ENCODE measurements at regions of chr2 and their contacts with region 1.

Region 1: DNA sequence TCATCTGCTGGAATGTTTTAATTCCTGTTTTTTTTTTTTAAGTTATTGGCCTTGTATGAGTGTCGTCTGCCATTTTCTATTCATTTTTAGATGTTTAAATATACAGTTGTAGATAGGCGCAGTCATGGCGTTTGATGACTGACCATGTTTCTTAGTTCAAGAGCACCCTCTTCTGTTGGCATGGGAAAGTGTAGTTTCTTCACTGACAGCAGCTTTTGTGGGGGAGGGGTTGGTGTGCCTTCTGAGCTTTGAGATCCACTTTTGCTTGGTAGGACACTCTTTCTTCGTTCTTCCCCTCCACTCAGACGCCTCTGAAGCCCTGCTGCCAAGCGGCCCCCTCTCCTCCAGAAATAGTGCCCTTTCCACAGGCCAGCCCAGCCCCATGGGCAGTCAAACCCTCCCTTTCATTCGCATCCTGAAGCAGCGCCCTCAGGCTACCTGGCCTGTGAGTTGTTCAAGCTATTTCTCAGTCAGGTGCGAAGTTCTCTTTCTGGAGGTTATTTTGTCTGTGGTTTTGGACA is 492.0 kb downstream of the TNS1 start:
- DNase-seq: peak; percentile 93
- ATAC-seq: peak; percentile 93
- H3K4me3 ChIP-seq: no peak overlapping the region
- H3K27ac ChIP-seq: peak overlapping the region; percentile 87
- H3K4me1 ChIP-seq: peaks cover 17% of the 10 kb centered on the region
- H3K27me3 ChIP-seq: no peaks in the 10 kb centered on the region
- CTCF ChIP-seq: peak; percentile 91
- POLR2A ChIP-seq: 0 out of 2 replicates have a peak, but pooled peaks have one; percentile 28
- RAD21 ChIP-seq: peak; percentile 97

Region 2: GRCh38 chr2:217054791-217055190 is 456.0 kb before region 1 on chr2:
- CTCF ChIA-PET with region 1: no interaction called
- POLR2A ChIA-PET with region 1: no interaction called
- dilution Hi-C with region 1: no loop called
- in situ Hi-C with region 1: no loop called
- intact Hi-C with region 1: loop called (anchors 10 kb)
- DNase-seq: no peak
- ATAC-seq: peak; percentile 16; the same call in 1 of the 2 replicates
- H3K4me3 ChIP-seq: no peak overlapping the region
- H3K27ac ChIP-seq: peak overlapping the region; percentile 13; the same call in 1 of the 2 replicates
- H3K4me1 ChIP-seq: peaks cover 3% of the 10 kb centered on the region
- H3K27me3 ChIP-seq: no peaks in the 10 kb centered on the region; the same call in 1 of the 2 replicates
- CTCF ChIP-seq: no peak
- POLR2A ChIP-seq: no peak
- RAD21 ChIP-seq: no peak

Region 3: DNA sequence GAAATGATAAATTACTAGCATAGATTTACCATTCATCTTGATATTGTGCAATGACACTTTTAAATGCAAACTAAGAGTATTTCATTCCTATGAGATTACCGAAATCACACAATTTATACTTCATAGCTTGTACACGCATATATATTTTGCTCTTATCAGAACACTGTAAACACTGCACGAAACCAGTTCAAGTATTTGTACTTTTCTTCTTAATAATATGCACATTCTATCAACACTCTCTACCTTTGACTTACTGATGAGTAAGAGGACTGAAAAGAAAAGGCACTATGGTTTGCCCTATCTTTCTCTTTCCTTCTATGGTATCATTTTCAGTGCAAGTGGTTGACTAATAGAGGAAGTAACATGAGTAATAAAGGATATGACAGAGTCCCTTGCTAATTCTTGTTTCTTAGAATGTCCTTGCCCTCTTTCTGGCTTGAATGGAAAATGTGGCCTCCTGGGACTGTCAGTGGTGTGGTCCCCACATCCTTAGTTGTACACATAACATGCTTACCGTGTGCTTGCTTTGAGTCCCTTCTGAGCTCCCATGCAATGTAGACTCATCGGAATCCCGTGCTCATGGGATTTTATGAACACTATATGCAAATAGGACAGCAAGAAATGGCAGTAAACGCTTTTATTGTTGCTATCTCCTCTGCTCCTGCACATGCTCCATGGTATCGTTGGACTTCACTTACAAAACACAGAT is 287.5 kb before region 1 on chr2:
- CTCF ChIA-PET with region 1: no interaction called
- POLR2A ChIA-PET with region 1: no interaction called
- dilution Hi-C with region 1: no loop called
- in situ Hi-C with region 1: no loop called
- intact Hi-C with region 1: loop called (anchors 1 kb)
- DNase-seq: peak; percentile 99
- ATAC-seq: peak; percentile 85
- H3K4me3 ChIP-seq: no peak overlapping the region
- H3K27ac ChIP-seq: peak overlapping the region; percentile 99
- H3K4me1 ChIP-seq: peaks cover 35% of the 10 kb centered on the region
- H3K27me3 ChIP-seq: no peaks in the 10 kb centered on the region
- CTCF ChIP-seq: no peak
- POLR2A ChIP-seq: no peak
- RAD21 ChIP-seq: peak; percentile 28

Region 4: GRCh38 chr2:217338306-217338916 is 172.4 kb before region 1 on chr2:
- CTCF ChIA-PET with region 1: no interaction called
- POLR2A ChIA-PET with region 1: interaction called, 13 read pairs
- dilution Hi-C with region 1: no loop called
- in situ Hi-C with region 1: no loop called
- intact Hi-C with region 1: loop called (anchors 2 kb)
- DNase-seq: peak; percentile 96
- ATAC-seq: peak; percentile 73
- H3K4me3 ChIP-seq: no peak overlapping the region
- H3K27ac ChIP-seq: peak overlapping the region; percentile 100
- H3K4me1 ChIP-seq: peaks cover 12% of the 10 kb centered on the region
- H3K27me3 ChIP-seq: no peaks in the 10 kb centered on the region
- CTCF ChIP-seq: no peak
- POLR2A ChIP-seq: no peak
- RAD21 ChIP-seq: no peak

Region 5: GRCh38 chr2:217713395-217714286 is 202.8 kb after region 1 on chr2:
- CTCF ChIA-PET with region 1: interaction called, 6 read pairs
- POLR2A ChIA-PET with region 1: no interaction called
- dilution Hi-C with region 1: no loop called
- in situ Hi-C with region 1: loop called (anchors 5 kb)
- intact Hi-C with region 1: loop called (anchors 1 kb)
- DNase-seq: peak; percentile 72
- ATAC-seq: peak; percentile 83
- H3K4me3 ChIP-seq: no peak overlapping the region
- H3K27ac ChIP-seq: peak overlapping the region; percentile 93
- H3K4me1 ChIP-seq: peaks cover 35% of the 10 kb centered on the region
- H3K27me3 ChIP-seq: no peaks in the 10 kb centered on the region
- CTCF ChIP-seq: peak; percentile 97
- POLR2A ChIP-seq: peak; percentile 54; the same call in 1 of the 2 replicates
- RAD21 ChIP-seq: peak; percentile 99

Measured in IMR-90 (cell line).